T-cell (primary cell): ENCODE measurements at regions of chr1 and their contacts with region 1.

Region 1: DNA sequence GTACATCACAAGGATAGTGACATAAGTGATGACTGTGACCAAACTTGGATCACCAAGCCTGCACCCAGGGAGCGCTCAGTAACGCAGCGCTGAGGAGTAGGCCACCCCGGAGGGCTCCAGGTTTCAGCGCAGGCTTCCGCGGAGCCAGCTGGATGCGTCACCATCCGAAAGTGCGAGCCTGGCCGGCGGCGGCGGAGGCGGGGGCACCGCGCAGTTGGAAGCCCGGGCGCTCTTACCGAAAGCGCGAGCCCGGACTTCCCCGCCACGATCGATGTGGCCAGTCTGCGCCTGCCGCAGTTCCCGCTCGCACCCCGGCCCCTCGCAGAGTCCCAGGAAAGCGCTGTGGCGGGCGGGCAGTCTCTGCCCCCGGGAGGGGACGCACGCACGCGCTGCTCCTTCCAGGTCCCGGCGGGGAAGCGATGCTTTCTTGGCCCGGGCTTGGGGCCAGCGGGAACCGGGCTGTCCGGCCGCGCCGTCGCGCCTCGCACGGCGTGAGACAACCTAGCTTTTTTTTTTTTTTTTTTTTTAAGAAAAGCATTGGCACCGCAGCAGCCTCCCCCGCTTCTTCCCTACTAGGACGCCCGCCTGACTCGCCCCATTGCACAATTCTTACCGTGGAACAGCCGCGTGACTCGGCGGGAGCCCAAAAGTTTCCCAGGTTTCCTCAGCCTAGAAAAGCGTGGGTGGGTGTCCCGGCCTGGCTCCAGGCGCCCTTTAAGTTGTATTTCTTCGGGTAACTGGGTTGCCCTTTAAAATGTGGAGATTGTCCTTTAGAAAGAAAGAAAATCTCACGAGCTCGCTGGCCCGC is 36.4 kb upstream of the JAK1 start:
- DNase-seq: peak; percentile 40 to 85 (median 69)
- ATAC-seq: peak; percentile 80 to 85 (median 80)
- H3K4me3 ChIP-seq: peak overlapping the region; percentile 61 to 85
- H3K4me3 Mint-ChIP-seq: peak overlapping the region; percentile 76 to 81 (median 80)
- H3K27ac ChIP-seq: peak overlapping the region; percentile 32
- H3K27ac Mint-ChIP-seq: peak overlapping the region; percentile 4 to 74
- H3K4me1 ChIP-seq: peaks cover 15 to 25% of the 10 kb centered on the region in 2 experiments
- H3K4me1 Mint-ChIP-seq: peaks cover 32 to 33% (median 32%) of the 10 kb centered on the region in 3 donors
- H3K27me3 ChIP-seq: peaks cover 0 to 8% of the 10 kb centered on the region in 2 experiments
- H3K27me3 Mint-ChIP-seq: no peaks in the 10 kb centered on the region

Region 2: DNA sequence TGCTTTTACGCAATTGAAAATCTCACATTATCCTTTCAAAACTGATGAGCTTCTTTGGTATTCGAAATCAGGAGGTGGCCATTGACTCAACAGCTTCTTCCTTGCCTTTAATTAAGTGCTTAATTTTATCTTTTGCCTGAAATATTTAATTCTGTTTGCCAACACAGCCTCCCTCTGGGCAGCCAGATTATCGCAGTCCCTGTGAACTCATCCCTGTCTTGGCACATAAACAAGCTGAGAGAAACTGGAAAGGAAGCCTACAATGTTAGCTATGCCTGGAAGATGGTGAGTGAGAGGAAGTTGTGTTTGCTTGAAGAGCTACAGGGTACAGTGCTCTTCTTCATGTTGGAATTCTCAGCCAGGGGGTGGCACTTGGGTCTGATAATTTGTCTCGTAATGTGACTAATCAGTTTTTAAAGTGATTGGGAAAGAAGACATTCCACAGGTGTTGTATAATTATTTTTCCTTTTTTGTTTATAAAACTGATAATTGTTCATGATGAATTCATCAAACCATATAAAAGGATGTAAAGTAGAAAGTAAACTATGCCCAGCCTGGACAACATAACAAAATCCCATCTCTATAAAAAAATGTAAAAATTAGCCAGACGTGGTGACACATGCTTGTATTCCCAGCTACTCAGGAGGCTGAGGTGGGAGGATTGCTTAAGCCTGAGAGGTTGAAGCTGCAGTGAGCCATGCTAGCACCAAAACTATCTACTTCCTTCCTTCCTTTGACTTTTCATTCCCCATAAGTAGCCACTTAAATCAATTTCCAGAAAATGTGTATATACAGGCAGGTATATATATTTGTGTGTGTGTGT is 348.0 kb before region 1 on chr1:
- CTCF ChIA-PET with region 1: no interaction called
- POLR2A ChIA-PET with region 1: no interaction called
- DNase-seq: peak in 2 of 35 experiments; percentile 1 to 7
- ATAC-seq: no peak
- H3K4me3 ChIP-seq: no peak overlapping the region
- H3K4me3 Mint-ChIP-seq: no peak overlapping the region
- H3K27ac ChIP-seq: no peak overlapping the region
- H3K27ac Mint-ChIP-seq: no peak overlapping the region
- H3K4me1 ChIP-seq: no peaks in the 10 kb centered on the region
- H3K4me1 Mint-ChIP-seq: no peaks in the 10 kb centered on the region
- H3K27me3 ChIP-seq: no peaks in the 10 kb centered on the region
- H3K27me3 Mint-ChIP-seq: peaks cover 0 to 10% of the 10 kb centered on the region in 2 donors

Region 3: DNA sequence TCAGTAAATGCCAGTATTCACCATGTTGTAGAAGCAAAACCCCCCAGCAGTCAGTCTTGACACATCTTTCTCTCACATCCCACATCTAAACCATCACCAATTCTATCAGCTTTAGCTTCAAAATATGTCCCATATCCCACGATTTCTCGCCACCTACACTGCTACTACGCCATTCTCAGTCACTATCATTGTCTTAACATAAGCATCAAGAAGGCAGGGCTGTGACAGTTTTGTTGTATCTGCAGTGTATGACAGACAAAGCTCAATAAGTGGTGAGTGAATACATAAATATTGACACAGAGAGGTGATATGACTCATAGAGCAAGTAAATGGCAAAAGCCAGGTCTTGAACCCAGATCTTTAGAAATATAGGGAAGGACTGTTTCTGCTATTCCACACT is 96.3 kb before region 1 on chr1:
- CTCF ChIA-PET with region 1: no interaction called
- POLR2A ChIA-PET with region 1: no interaction called
- DNase-seq: no peak
- ATAC-seq: no peak
- H3K4me3 ChIP-seq: no peak overlapping the region
- H3K4me3 Mint-ChIP-seq: peak overlapping the region in 1 of 3 donors; percentile 15
- H3K27ac ChIP-seq: no peak overlapping the region
- H3K27ac Mint-ChIP-seq: peak overlapping the region; percentile 17 to 21
- H3K4me1 ChIP-seq: peaks cover 2 to 25% of the 10 kb centered on the region in 2 experiments
- H3K4me1 Mint-ChIP-seq: peaks cover 97 to 99% (median 97%) of the 10 kb centered on the region in 3 donors
- H3K27me3 ChIP-seq: no peaks in the 10 kb centered on the region
- H3K27me3 Mint-ChIP-seq: no peaks in the 10 kb centered on the region

Region 4: DNA sequence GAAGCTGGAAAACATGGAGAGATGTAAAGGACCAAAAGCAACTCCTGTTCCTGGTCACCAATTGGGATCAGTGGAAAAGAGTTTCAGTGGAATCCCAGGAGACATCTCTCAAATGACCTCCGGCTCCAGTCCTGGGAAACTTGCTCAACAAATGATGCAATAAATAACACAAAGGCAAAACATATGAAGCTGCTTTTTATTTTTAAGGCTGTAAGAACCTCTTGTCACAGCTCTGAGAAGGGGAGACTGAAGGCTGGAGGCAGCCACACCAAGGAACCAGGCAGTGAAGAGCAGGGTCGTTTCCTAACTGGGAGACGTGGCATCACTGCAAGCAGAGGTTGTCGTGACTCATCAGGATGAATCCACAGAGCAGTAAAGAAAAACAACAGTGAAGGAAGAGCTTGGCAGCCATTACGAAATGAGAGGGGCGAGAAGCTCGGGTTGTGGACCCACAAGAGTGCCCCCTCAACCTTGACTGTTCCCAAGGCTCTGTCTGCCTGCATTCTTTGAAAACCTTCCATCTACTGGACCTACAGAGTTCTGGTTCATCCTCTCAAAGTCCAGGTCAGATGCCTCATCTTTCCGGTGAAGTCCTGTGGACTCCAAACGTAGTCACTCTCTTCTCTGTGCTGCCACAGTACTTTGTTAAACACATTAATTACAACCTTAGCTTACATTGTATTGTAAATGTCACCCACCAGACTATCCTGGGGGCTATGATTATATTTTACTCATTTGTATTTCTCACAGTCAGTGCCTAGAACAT is 68.4 kb before region 1 on chr1:
- CTCF ChIA-PET with region 1: no interaction called
- POLR2A ChIA-PET with region 1: no interaction called
- DNase-seq: no peak
- ATAC-seq: peak in 2 of 4 experiments; percentile 13 to 21
- H3K4me3 ChIP-seq: no peak overlapping the region
- H3K4me3 Mint-ChIP-seq: peak overlapping the region; percentile 28 to 46 (median 31)
- H3K27ac ChIP-seq: no peak overlapping the region
- H3K27ac Mint-ChIP-seq: peak overlapping the region; percentile 53 to 59
- H3K4me1 ChIP-seq: peaks cover 15 to 42% of the 10 kb centered on the region in 2 experiments
- H3K4me1 Mint-ChIP-seq: peaks cover 85 to 88% (median 86%) of the 10 kb centered on the region in 3 donors
- H3K27me3 ChIP-seq: no peaks in the 10 kb centered on the region
- H3K27me3 Mint-ChIP-seq: no peaks in the 10 kb centered on the region

Region 5: DNA sequence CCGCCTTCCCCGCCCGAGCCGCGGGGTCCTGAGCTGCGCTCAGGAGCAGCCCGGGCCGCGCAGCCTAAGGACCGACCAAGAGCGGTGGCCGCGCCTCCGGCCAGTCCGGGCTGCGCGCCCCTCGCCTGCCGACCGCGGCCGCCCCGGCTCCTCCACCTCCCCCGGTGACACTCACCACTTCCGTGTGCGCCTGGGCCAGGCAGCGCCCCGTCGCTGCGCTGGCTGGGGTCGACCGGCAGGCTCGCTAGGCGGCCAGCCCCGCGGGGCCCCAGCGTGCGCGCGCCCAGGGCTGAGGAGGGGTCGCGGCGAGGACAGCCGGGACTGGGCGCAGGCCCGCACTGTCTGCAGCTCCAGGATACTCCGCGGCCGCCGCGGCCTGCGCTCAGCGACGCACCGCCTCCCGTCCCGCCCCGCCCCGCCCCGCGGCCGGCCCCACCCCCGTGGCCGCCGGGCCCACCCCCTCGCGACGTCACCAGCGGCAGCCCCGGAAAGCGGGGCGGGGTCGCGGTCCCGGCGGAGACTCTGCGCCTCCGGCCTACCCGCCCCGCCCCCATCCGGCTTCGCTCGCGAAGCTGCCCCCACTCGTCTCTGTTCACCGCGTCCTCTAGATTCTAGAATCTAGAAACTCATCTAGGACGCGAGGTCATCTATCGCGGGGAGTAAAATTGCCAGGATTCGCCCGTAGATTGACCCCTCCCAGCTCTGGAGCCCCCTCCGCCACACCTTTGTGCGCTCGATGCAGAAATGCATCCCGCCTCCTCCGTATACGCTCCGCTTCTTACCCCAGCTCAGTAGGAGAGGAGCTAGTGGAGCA is 36.3 kb before region 1 on chr1 and contains the start of gene JAK1:
- CTCF ChIA-PET with region 1: interaction called in 1 of 2 experiments, 6 read pairs
- POLR2A ChIA-PET with region 1: interaction called, 6 to 24 read pairs
- DNase-seq: peak; percentile 77 to 96 (median 88)
- ATAC-seq: peak; percentile 78 to 88 (median 82)
- H3K4me3 ChIP-seq: peak within 1 kb of the TSS; percentile 93 to 100
- H3K4me3 Mint-ChIP-seq: peak within 1 kb of the TSS; percentile 95 to 96 (median 95)
- H3K27ac ChIP-seq: peak within 1 kb of the TSS; percentile 96
- H3K27ac Mint-ChIP-seq: peak within 1 kb of the TSS; percentile 97
- H3K4me1 ChIP-seq: peaks cover 37 to 49% of the 10 kb centered on the region in 2 experiments
- H3K4me1 Mint-ChIP-seq: peaks cover 39 to 57% (median 55%) of the 10 kb centered on the region in 3 donors
- H3K27me3 ChIP-seq: no peaks in the 10 kb centered on the region
- H3K27me3 Mint-ChIP-seq: no peaks in the 10 kb centered on the region
- total RNA-seq, gene JAK1: 272 to 323 (median 288) TPM

Region 6: DNA sequence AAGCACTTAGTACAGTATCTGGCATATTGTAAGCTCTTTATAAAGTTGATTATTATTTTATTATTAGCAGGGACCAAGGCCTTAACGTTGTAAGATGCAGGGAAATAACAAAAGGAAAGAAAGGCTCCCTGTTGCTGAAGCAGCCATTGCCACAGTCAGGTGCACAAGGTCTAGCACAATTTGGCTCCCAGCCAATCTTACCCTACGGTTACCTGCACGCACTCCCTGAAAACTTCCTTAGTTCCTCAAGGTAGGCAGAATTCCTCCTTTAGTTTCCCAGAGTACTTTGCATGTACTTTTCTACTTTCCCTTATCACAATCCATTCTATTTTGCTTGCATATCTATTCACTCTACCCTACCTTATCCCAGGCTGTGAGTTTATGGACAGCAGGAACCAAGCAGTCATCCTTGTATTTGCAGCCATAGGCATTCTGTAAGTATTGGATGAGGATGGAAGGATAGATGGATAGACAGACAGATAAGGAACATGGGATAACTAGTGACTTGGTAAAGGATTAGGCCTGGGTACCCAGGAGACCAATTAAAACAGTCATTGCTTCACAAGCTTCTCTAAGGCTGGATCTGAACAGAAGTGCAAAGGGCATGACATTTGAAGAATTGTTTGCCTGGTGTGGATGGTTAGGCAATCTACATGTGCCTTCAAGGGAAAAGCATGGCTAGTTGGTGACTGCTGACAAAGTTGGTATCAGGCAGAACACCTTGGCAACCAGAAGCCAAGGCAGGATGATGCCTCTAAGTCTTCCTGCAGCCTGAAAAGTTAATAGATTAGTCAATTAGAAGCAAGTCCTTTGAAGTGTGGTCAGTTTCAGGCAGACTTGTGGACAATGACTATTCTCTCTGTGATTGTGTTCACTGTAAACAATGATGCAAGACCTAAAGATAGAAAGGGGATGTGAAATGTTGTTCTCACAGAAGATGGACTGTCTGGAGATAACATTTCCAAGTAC is 15.5 kb before region 1 on chr1:
- CTCF ChIA-PET with region 1: interaction called in 1 of 2 experiments, 3 read pairs
- POLR2A ChIA-PET with region 1: interaction called in 1 of 2 experiments, 16 read pairs
- DNase-seq: no peak
- ATAC-seq: no peak
- H3K4me3 ChIP-seq: no peak overlapping the region
- H3K4me3 Mint-ChIP-seq: no peak overlapping the region
- H3K27ac ChIP-seq: no peak overlapping the region
- H3K27ac Mint-ChIP-seq: no peak overlapping the region
- H3K4me1 ChIP-seq: no peaks in the 10 kb centered on the region
- H3K4me1 Mint-ChIP-seq: peaks cover 3 to 14% (median 8%) of the 10 kb centered on the region in 3 donors
- H3K27me3 ChIP-seq: no peaks in the 10 kb centered on the region
- H3K27me3 Mint-ChIP-seq: no peaks in the 10 kb centered on the region